ENCODE measurements at regions of chr20 and their contacts with region 1.

Region 1: DNA sequence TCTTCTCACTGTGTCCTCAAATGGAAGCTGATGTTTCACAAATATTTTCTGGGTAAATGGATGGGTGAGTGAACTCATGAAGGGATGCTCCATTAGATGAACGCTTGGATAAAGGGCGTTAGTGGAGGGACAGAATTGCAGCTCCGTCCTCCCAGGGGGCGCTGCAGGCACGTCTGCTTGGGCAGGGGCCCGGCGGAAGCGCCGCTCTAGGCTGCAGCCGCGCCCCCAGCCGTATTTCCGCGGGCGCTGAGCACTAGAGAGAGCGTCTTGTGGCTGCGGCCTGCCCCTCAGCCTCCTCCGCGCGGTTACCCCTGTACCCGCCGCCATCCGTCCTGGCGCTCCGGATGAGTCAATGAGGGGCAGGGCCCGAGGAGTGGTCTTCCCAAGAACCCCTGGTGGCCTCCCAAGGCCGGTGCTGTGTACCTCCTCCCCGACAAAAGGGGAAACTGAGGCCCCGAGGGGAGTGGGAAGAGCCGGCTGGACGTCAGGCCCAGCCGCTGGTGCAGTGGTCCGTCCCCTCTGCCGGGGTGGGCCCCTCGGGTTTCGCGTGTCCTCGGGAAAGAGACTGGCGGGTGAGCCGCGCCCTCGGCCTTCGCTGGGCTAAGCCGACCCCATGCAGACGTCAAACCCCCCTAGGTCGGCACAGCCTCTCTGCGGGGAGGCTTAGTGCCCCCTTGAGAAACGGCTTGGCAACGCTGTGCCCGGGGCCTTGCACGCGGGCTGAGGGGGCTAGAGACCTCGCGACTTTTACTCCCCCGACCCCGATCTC is 11.5 kb upstream of the SNHG17 start:
- DNase-seq: peak; percentile 96
- H3K4me3 ChIP-seq: peak overlapping the region; percentile 90
- H3K27ac ChIP-seq: peak overlapping the region; percentile 95
- H3K4me1 ChIP-seq: peaks cover 10% of the 10 kb centered on the region
- H3K27me3 ChIP-seq: no peaks in the 10 kb centered on the region
- CTCF ChIP-seq: peak; percentile 96

Region 2: DNA sequence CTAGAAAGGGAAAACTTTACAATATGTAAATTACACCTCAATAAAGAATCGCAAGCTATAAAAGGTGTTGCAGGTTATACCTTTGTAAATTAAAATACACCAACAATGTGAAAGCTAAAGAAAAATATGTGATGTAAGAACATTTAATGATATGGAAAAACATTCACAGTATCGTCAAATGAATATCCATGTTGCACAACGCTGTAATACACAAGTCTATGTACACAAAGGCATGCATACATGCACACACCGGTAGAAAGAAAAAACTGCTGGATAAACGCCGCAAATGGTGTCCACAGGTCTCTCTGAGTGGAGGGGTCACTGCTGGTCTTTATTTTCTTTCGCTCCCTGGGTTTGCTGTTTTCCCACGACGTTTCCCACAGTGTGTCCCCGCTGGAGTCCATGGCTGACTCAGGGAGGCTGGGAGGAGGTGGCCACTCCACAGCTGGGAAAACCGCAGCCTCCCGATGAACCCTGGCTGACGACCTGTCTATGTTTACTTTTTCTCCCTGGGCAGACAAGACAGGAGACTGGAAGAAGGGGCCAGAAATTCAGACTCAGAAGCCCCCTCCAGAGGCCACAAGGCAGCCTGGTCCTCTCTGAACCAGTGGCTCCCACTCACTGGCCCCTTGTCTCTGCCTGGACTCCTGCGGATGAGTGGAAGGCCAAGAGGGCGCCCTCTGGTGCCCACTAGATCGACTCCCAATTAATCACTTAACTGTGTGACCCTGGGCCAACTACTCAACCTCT is 155.6 kb before region 1 on chr20:
- CTCF ChIA-PET with region 1: no interaction called
- POLR2A ChIA-PET with region 1: no interaction called
- intact Hi-C with region 1: no loop called
- DNase-seq: peak; percentile 22
- H3K4me3 ChIP-seq: no peak overlapping the region
- H3K27ac ChIP-seq: no peak overlapping the region
- H3K4me1 ChIP-seq: no peaks in the 10 kb centered on the region
- H3K27me3 ChIP-seq: no peaks in the 10 kb centered on the region
- CTCF ChIP-seq: peak; percentile 50

Region 3: DNA sequence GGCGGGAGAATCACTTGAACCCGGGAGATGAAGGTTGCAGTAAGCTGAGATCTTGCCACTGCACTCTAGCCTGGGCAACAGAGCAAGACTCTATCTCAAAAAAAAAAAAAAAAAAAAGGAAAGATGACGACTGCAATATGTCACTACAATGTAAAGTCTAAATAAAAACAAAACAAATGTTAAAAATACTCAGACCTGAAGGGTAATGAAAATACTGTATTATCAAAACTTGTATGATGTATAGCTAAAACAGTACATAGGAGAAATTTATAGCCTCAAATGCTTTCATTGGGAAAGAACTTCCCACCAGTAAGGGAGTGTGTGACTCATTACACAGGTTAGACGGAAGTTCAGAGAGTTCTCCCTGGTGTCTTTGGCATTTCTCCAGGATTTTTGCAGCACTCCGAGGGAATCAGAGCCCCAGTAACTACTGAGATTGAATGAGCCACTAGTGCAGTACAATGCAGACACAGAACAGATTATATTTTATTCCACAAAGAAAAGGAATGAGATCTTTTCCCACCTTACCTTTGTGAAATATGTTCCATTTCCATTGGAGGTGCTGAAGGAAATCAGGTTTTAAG is 13.5 kb after region 1 on chr20:
- CTCF ChIA-PET with region 1: interaction called, 6 read pairs
- POLR2A ChIA-PET with region 1: interaction called, 14 read pairs
- intact Hi-C with region 1: no loop called
- DNase-seq: peak; percentile 91
- H3K4me3 ChIP-seq: no peak overlapping the region
- H3K27ac ChIP-seq: no peak overlapping the region
- H3K4me1 ChIP-seq: no peaks in the 10 kb centered on the region
- H3K27me3 ChIP-seq: no peaks in the 10 kb centered on the region
- CTCF ChIP-seq: no peak

Measured in A673 (cell line).